Dorsolateral prefrontal cortex (tissue), 120 donors: ENCODE measurements at regions of chr19 and their contacts with region 1.

Region 1: GRCh38 chr19:12551060-12551832 is at the start of gene ZNF564:
- DNase-seq: peak; percentile 88 to 100 (median 98)
- H3K4me3 ChIP-seq: peak within 1 kb of the TSS; percentile 68 to 99 (median 91)
- H3K27ac ChIP-seq: peak within 1 kb of the TSS; percentile 85 to 99 (median 97)
- H3K27me3 ChIP-seq: no peaks in the 10 kb centered on the region
- CTCF ChIP-seq: peak in 23 of 56 donors; percentile 4 to 50 (median 15)
- total RNA-seq, gene ZNF564: 10.2 to 25.8 (median 14.0) TPM

Region 2: GRCh38 chr19:12440541-12441316 is 110.5 kb before region 1 on chr19 and contains the start of gene ZNF443:
- intact Hi-C with region 1: loop called in 1 of 2 experiments (anchors 5 kb)
- DNase-seq: peak; percentile 96 to 100 (median 99)
- H3K4me3 ChIP-seq: peak within 1 kb of the TSS; percentile 43 to 92 (median 70)
- H3K27ac ChIP-seq: peak within 1 kb of the TSS in 35 of 59 donors; percentile 9 to 82 (median 56)
- H3K27me3 ChIP-seq: no peaks in the 10 kb centered on the region
- CTCF ChIP-seq: peak in 6 of 56 donors; percentile 5 to 15 (median 12)
- total RNA-seq, gene ZNF443: 2.2 to 9.7 (median 5.7) TPM

Region 3: GRCh38 chr19:12484371-12485051 is 66.7 kb before region 1 on chr19 and contains the start of gene ZNF709:
- intact Hi-C with region 1: loop called in 1 of 2 experiments (anchors 5 kb)
- DNase-seq: peak; percentile 78 to 95 (median 92)
- H3K4me3 ChIP-seq: peak within 1 kb of the TSS; percentile 50 to 99 (median 94)
- H3K27ac ChIP-seq: peak within 1 kb of the TSS in 55 of 59 donors; percentile 4 to 90 (median 77)
- H3K27me3 ChIP-seq: no peaks in the 10 kb centered on the region
- CTCF ChIP-seq: peak in 12 of 56 donors; percentile 7 to 34 (median 17)
- total RNA-seq, gene ZNF709: 4.7 to 18.1 (median 9.9) TPM

Region 4: DNA sequence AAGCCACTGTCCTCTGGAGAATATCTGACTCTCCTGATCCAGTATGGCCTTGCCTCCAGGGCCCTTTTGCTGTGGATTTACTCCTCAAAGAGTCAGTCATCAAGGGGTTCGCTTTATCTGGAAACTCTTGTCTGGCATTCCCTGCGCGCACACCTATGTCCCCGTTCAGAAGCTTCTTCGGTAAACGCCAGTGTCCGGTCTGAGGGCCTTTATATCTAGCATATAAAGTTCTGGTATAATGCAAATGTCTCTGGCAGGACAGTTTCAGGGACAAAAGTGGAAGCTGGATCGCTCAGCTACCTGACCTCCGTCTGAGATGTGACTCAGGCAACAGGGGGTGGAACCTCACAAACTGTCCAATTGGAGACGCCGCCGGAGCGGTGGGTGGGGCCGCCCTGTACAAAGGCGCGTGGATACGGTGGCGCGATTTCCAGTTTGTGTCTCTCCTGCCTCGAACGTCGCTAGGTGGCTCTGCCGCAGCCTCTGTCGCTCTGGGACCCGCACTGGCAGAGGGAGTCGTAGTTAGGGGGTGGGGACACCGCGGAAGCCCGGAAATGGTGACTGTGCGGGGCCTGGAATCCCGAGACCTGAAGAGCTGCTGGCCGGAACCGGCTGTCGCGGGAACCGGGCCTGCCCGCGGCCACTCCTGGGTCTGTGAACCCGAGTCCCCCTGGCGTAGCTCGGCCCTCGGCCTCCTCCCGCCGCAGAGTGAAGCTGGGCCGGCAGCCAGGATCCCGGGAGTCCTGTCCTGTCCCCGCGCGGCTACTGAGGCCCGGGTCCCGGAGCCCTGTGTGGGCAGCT is 56.0 kb before region 1 on chr19:
- intact Hi-C with region 1: loop called (anchors 5 kb)
- DNase-seq: peak; percentile 93 to 98 (median 97)
- H3K4me3 ChIP-seq: peak overlapping the region; percentile 61 to 96 (median 79)
- H3K27ac ChIP-seq: peak overlapping the region; percentile 22 to 98 (median 90)
- H3K27me3 ChIP-seq: no peaks in the 10 kb centered on the region
- CTCF ChIP-seq: peak in 55 of 56 donors; percentile 21 to 88 (median 67)

Region 5: GRCh38 chr19:12610540-12611360 is 59.5 kb after region 1 on chr19 and contains the starts of genes ZNF490 and ZNF791:
- intact Hi-C with region 1: loop called in 1 of 2 experiments (anchors 5 kb)
- DNase-seq: peak; percentile 97 to 100 (median 99)
- H3K4me3 ChIP-seq: peak within 1 kb of the TSS; percentile 70 to 100 (median 96)
- H3K27ac ChIP-seq: peak within 1 kb of the TSS; percentile 39 to 98 (median 91)
- H3K27me3 ChIP-seq: no peaks in the 10 kb centered on the region
- CTCF ChIP-seq: peak in 40 of 56 donors; percentile 5 to 55 (median 29)
- total RNA-seq, gene ZNF490: 11.0 to 31.0 (median 19.9) TPM
- total RNA-seq, gene ZNF791: 21.1 to 51.1 (median 33.9) TPM